ENCODE measurements at regions of chr7 and their contacts with region 1.

Region 1: DNA sequence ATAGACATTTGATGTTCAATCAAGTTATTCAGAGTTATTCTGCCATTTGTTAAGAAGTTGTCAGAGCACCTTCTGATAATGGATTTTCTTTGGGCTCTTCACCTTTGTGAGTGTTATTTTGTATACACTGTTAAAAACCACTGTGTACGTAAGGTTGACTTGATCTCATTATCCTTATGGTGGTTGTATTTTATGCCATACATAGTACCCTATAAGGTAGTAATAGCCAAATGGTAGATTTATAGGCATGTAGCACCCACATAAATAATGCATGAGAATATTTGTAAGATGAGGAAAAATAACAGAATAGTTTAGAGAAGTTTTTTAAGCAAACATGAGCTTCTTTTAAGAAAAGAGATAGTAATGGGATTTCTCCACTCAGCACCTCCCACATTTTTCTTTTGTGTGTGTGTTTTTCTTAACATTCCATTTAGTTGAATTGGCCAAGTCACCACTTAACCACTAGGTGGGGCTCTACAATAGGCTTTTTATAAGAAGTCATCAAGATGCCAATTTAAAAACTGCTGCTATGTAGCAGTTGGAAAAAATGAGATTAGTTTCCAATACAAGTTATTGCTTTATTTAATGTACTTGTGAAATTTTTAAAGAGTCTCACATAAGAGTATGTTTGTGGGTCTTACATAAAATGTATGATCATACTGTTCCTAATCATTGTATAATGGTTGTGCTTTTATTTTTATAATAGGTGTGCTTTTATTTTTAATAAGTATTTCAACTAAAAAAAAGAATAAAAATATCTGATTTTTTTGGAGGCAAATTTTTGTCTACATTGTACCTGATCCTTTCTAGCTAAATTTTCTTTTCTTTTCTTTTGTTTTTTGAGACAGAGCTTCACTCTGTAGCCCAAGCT is 41.1 kb upstream of the STMP1 start:
- DNase-seq: peak; percentile 72
- H3K4me3 Mint-ChIP-seq: no peak overlapping the region
- H3K27ac Mint-ChIP-seq: no peak overlapping the region
- H3K4me1 Mint-ChIP-seq: no peaks in the 10 kb centered on the region
- H3K27me3 Mint-ChIP-seq: no peaks in the 10 kb centered on the region

Region 2: GRCh38 chr7:135274495-135275268 is 346.5 kb before region 1 on chr7:
- intact Hi-C with region 1: loop called (anchors 2 kb)
- DNase-seq: peak; percentile 93
- H3K4me3 Mint-ChIP-seq: no peak overlapping the region
- H3K27ac Mint-ChIP-seq: no peak overlapping the region
- H3K4me1 Mint-ChIP-seq: peaks cover 3% of the 10 kb centered on the region
- H3K27me3 Mint-ChIP-seq: peaks cover 7% of the 10 kb centered on the region

Region 3: GRCh38 chr7:135522509-135522908 is 98.7 kb before region 1 on chr7:
- intact Hi-C with region 1: no loop called
- DNase-seq: no peak
- H3K4me3 Mint-ChIP-seq: no peak overlapping the region
- H3K27ac Mint-ChIP-seq: no peak overlapping the region
- H3K4me1 Mint-ChIP-seq: no peaks in the 10 kb centered on the region
- H3K27me3 Mint-ChIP-seq: no peaks in the 10 kb centered on the region

Region 4: DNA sequence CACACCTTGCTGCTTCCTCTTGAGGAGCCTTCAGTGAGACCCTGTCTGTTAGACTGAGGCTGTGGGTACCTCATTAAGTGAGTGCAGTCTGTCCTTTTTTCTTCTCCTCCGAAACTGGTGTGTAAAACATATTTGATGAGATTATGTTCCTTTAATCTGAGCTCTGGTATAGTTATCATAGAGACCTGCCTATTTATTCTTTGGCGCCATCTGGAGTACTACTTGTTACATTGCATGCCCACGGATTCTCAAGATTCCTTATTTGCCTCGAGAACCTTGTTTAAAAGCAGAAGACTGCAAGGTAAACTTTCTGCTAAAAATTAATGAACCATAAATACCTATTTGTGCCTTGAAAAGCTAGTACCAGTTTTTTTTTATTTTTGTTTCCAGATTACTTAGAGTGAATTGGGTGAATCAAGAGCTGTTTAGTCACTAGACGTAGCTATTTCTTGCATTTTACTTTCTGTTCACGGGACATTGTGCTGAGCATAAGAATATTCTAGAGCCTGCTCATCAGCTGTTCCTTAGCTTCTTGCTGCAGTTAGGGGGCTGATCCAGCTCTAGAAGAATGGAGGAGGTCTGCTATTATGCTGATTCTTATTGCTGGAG is 24.2 kb after region 1 on chr7:
- intact Hi-C with region 1: loop called (anchors 1 kb)
- DNase-seq: peak; percentile 76
- H3K4me3 Mint-ChIP-seq: no peak overlapping the region
- H3K27ac Mint-ChIP-seq: no peak overlapping the region
- H3K4me1 Mint-ChIP-seq: no peaks in the 10 kb centered on the region
- H3K27me3 Mint-ChIP-seq: no peaks in the 10 kb centered on the region